ENCODE measurements at regions of chr17 and their contacts with region 1.

Region 1: DNA sequence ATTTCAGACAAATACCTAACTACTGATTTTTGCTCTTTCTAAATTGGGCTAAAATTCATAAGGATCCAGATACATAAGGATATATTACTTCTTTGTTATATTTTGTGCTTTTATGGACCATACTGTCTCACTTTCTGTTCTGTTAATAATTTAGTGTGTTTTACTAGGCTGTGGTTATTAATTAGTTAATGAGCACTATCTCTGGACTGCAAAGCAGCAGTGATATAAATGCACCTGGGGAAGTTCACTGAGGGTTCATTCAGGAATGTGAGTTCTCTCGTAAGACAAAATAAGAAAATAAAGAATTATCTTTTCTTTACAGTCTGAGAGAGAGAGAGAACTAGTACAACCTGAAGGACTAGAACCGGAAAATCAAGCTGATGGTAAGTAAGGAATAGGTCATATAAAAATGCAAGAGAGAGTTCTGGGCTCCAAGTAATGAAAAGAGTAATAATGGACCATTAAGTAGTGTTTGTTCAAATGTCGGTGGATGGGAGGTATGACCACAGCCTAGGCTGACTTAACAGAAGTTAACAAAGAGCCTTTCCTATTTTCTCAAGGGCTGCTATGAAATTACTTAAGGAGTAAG is 55.6 kb downstream of the IKZF3 start:
- DNase-seq: no peak
- ATAC-seq: no peak
- H3K4me3 ChIP-seq: no peak overlapping the region
- H3K4me3 Mint-ChIP-seq: no peak overlapping the region
- H3K27ac ChIP-seq: peak overlapping the region in 1 of 2 donors; percentile 79
- H3K27ac Mint-ChIP-seq: peak overlapping the region; percentile 81
- H3K4me1 ChIP-seq: peaks cover 26 to 32% of the 10 kb centered on the region in 2 donors
- H3K4me1 Mint-ChIP-seq: peaks cover 69% of the 10 kb centered on the region
- H3K27me3 ChIP-seq: no peaks in the 10 kb centered on the region
- H3K27me3 Mint-ChIP-seq: no peaks in the 10 kb centered on the region
- CTCF ChIP-seq: no peak

Region 2: GRCh38 chr17:39845052-39845846 is 36.7 kb after region 1 on chr17:
- CTCF ChIA-PET with region 1: interaction called, 3 read pairs
- POLR2A ChIA-PET with region 1: interaction called, 4 read pairs
- intact Hi-C with region 1: loop called (anchors 5 kb)
- DNase-seq: no peak
- ATAC-seq: no peak
- H3K4me3 ChIP-seq: no peak overlapping the region
- H3K4me3 Mint-ChIP-seq: no peak overlapping the region
- H3K27ac ChIP-seq: peak overlapping the region in 1 of 2 donors; percentile 64
- H3K27ac Mint-ChIP-seq: peak overlapping the region; percentile 68
- H3K4me1 ChIP-seq: peaks cover 58 to 65% of the 10 kb centered on the region in 2 donors
- H3K4me1 Mint-ChIP-seq: peaks cover 69% of the 10 kb centered on the region
- H3K27me3 ChIP-seq: no peaks in the 10 kb centered on the region
- H3K27me3 Mint-ChIP-seq: no peaks in the 10 kb centered on the region
- CTCF ChIP-seq: no peak

Region 3: DNA sequence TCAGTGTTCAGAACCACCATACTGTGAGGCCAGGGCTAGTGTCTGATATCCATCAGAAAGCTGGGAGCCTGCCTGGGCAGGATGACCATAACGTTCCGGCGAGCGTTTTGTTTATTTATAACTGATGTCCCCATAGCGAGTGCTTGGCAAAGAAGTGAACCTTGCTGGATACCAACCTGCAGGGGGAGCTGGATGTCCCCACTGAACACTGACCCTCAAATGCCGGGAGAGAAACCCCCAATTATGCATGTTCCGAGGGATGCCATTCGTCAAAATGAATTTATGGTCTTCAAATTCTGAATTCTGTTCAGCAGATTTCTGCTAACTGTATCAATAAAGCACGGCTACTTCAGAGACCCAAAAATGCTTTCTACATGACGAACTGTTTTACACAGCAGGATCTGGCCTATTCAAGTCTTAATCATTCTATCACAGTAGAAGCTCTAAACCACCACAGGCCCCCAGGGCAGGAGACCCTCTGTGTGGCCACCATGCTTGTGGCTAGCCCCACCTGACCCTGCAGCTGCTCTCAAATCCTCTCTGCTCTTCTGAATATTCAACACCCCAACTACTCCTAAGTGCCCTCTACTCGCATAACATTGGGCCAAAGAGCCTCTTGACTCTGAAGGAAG is 230.5 kb after region 1 on chr17:
- CTCF ChIA-PET with region 1: no interaction called
- POLR2A ChIA-PET with region 1: no interaction called
- intact Hi-C with region 1: no loop called
- DNase-seq: no peak
- ATAC-seq: no peak
- H3K4me3 ChIP-seq: no peak overlapping the region
- H3K4me3 Mint-ChIP-seq: no peak overlapping the region
- H3K27ac ChIP-seq: no peak overlapping the region
- H3K27ac Mint-ChIP-seq: no peak overlapping the region
- H3K4me1 ChIP-seq: no peaks in the 10 kb centered on the region
- H3K4me1 Mint-ChIP-seq: no peaks in the 10 kb centered on the region
- H3K27me3 ChIP-seq: no peaks in the 10 kb centered on the region
- H3K27me3 Mint-ChIP-seq: no peaks in the 10 kb centered on the region
- CTCF ChIP-seq: peak; percentile 28

Region 4: DNA sequence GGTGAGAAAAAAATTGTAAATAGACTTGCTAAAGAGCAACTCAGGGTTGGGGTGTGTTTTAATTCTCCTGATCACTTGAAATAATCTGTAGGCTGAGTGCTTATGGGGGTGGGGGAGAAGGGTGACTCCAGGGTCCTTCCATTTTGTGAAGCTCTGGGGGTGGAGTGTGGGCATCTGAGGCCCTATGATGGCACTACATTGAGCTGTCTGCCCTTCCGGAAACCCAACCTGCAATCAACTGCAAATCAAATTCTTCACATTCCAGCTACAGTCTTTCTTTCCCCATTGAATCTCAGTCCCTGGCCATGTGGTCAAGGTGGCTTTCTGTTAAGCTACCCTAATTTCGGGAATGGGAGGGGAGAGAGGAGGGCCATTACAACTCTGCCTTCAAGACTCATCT is 473.2 kb after region 1 on chr17:
- CTCF ChIA-PET with region 1: no interaction called
- POLR2A ChIA-PET with region 1: interaction called, 10 read pairs
- intact Hi-C with region 1: no loop called
- DNase-seq: no peak
- ATAC-seq: no peak
- H3K4me3 ChIP-seq: no peak overlapping the region
- H3K4me3 Mint-ChIP-seq: no peak overlapping the region
- H3K27ac ChIP-seq: no peak overlapping the region
- H3K27ac Mint-ChIP-seq: no peak overlapping the region
- H3K4me1 ChIP-seq: no peaks in the 10 kb centered on the region
- H3K4me1 Mint-ChIP-seq: peaks cover 1% of the 10 kb centered on the region
- H3K27me3 ChIP-seq: no peaks in the 10 kb centered on the region
- H3K27me3 Mint-ChIP-seq: no peaks in the 10 kb centered on the region
- CTCF ChIP-seq: no peak

Measured in B cell (primary cell).